ENCODE measurements at regions of chr11 and their contacts with region 1.

Region 1: DNA sequence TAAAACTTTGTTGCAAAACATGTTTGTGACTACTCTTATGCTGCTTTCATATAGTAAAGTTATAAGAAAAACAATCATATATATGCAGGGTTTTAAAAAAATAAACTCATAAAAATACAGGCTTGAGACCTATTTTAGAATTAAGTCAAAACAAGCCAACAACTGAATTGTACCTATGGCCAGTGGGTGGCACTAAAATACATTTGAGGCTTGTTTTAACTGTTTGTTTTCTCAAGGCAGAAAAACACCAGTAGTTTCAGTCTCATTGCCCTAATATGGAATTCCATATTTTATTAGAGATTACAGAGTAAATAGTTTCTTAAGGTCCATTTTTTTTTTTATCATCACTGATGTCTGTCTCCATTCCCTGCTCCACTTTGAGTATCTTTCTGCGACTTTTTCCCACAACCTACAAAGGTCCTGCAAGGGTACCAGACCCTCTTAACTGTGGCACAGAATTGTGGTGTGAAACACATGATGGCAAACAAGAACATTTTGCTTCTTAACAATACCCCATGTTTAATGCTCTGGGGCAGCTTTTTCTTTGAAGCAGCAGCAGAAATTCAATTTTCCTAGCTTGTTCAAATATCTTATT is 8.5 kb upstream of the CCDC89 start:
- DNase-seq: no peak
- ATAC-seq: no peak
- H3K4me3 ChIP-seq: no peak overlapping the region
- H3K27ac ChIP-seq: no peak overlapping the region
- H3K4me1 ChIP-seq: no peaks in the 10 kb centered on the region
- H3K27me3 ChIP-seq: no peaks in the 10 kb centered on the region
- CTCF ChIP-seq: peak in 3 of 5 experiments; percentile 12 to 33 (median 18)
- POLR2A ChIP-seq: no peak

Region 2: GRCh38 chr11:85810871-85811611 is 116.6 kb after region 1 on chr11 and contains the start of gene SYTL2:
- in situ Hi-C with region 1: no loop called
- intact Hi-C with region 1: loop called (anchors 10 kb)
- DNase-seq: peak; percentile 22 to 43
- ATAC-seq: peak; percentile 78 to 82
- H3K4me3 ChIP-seq: peak within 1 kb of the TSS; percentile 60 to 83 (median 64)
- H3K27ac ChIP-seq: peak within 1 kb of the TSS in 3 of 4 donors; percentile 28 to 55 (median 42)
- H3K4me1 ChIP-seq: peaks cover 0 to 8% of the 10 kb centered on the region in 2 donors
- H3K27me3 ChIP-seq: no peaks in the 10 kb centered on the region
- CTCF ChIP-seq: no peak
- POLR2A ChIP-seq: peak; percentile 52 to 68
- total RNA-seq, gene SYTL2: 0.97 to 11.9 (median 2.7) TPM